Right ventricle myocardium superior (tissue), 1 donor: ENCODE measurements at regions of chr10 and their contacts with region 1.

Region 1: DNA sequence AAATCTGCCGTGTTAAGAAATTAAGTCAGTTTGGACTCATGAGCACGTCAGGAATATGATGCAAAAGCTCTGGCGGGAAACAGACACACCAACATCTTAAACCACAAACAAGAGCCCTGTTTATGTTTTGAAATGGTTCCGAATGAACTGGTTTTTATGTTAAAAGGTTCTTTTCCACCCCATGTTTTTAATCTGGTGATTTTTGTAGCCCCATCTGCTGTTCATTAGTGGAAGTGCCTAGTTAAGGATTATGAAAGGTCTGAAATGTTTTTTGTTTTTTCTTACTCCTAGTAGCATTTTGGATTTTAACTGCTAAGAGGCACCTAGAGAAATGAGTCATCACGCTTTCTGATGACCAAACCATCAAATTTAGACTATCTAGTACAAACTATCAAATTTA is 404.1 kb upstream of the MKI67 start:
- DNase-seq: no peak
- ATAC-seq: no peak

Region 2: GRCh38 chr10:128263891-128264688 is 266.2 kb before region 1 on chr10:
- intact Hi-C with region 1: loop called (anchors 10 kb)
- DNase-seq: peak; percentile 69
- ATAC-seq: peak; percentile 68

Region 3: GRCh38 chr10:128631801-128632241 is 101.5 kb after region 1 on chr10:
- intact Hi-C with region 1: no loop called
- DNase-seq: no peak
- ATAC-seq: peak; percentile 20

Region 4: GRCh38 chr10:128922172-128922571 is 391.9 kb after region 1 on chr10:
- intact Hi-C with region 1: no loop called
- DNase-seq: no peak
- ATAC-seq: peak; percentile 65